ENCODE measurements at regions of chr2 and their contacts with region 1.

Region 1: DNA sequence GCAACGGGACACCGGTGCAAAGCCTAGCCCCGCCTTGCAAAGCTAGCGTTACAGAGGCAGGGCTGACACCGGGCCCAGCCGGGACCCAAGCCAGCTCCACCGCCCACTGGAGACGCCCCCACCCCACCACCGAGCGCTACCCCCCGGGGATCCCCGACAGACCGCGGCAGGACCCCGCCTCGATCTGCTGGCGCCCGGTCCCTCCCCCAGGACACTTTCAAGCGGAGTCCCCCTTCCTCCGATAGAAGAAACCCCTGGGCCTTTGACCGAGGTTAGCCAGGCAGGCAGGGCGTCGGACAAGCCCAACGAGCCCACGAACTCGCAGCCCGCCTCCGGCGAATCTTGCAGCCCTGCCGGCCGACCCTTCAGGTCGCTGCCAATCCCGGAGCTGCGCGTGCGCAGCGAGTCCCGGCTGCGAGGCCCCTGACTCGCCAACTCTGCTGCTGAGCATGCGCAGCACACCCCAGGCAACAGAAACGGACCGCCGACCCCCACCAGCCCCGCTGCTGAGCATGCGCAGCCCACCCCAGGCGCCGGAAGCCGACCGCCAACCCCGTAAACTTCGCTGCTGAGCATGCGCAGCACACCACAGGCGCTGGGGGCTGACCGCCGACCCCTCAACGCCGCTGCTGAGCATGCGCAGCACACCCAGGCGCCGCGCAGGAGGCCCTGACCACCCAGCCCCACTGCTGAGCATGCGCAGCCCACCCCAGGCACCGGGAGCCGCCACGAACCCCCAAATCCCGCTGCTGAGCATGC is 656 bp downstream of the ADI1 start:
- DNase-seq: peak; percentile 92
- H3K4me3 Mint-ChIP-seq: peak overlapping the region; percentile 78
- H3K27ac Mint-ChIP-seq: peak overlapping the region; percentile 65
- H3K4me1 Mint-ChIP-seq: peaks cover 26% of the 10 kb centered on the region
- H3K27me3 Mint-ChIP-seq: no peaks in the 10 kb centered on the region
- CTCF ChIP-seq: no peak

Region 2: GRCh38 chr2:3470166-3470651 is 48.5 kb before region 1 on chr2:
- CTCF ChIA-PET with region 1: interaction called, 3 read pairs
- POLR2A ChIA-PET with region 1: interaction called, 23 read pairs
- intact Hi-C with region 1: no loop called
- DNase-seq: peak; percentile 82
- H3K4me3 Mint-ChIP-seq: peak overlapping the region; percentile 66
- H3K27ac Mint-ChIP-seq: peak overlapping the region; percentile 95
- H3K4me1 Mint-ChIP-seq: peaks cover 51% of the 10 kb centered on the region
- H3K27me3 Mint-ChIP-seq: no peaks in the 10 kb centered on the region
- CTCF ChIP-seq: no peak

Region 3: DNA sequence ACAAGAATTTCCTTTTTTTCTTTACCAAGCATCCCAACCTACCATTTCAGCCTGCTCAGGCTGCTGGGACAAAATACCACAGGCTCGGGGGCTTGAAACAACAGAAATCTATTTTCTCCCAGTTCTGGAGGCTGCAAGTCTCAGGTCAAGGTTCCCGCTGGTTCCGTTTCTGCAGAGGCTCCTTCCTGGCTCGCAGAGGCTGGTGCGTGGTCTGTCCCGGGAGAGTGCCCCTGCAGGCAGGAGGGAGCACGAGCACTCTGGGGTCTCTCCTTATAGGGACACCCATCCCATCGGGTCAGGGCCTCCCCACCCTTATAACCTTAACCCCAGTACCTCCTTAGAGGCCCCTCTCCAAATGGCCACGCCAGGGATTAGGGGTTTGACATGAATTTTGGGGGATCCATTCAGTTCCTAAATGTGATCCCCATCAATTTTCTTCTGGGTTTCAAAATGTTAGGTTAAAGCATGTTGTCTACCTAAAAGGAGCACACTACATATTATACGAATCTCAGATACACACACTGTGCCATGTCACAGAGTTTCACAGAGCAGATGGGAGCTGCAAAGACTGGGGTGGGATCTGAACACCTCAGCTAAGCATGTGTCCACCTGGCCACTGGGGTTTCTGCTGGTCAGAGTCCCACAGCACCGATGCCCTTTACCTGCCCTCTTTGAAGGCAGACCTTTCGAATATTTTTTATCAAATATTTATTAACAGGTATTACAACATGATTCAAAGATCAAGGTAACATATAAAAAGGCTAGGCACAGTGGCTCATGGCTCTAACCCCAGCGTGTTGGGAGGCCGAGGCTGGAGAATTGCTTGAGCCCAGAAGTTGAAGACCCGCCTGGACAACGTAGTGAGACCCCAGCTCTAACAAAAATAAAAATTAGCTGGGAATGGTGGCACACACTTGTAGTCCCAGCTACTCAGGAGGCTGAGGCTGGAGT is 18.3 kb after region 1 on chr2:
- CTCF ChIA-PET with region 1: interaction called, 6 read pairs
- POLR2A ChIA-PET with region 1: interaction called, 18 read pairs
- intact Hi-C with region 1: no loop called
- DNase-seq: peak; percentile 15
- H3K4me3 Mint-ChIP-seq: peak overlapping the region; percentile 66
- H3K27ac Mint-ChIP-seq: peak overlapping the region; percentile 95
- H3K4me1 Mint-ChIP-seq: peaks cover 15% of the 10 kb centered on the region
- H3K27me3 Mint-ChIP-seq: no peaks in the 10 kb centered on the region
- CTCF ChIP-seq: no peak

Region 4: DNA sequence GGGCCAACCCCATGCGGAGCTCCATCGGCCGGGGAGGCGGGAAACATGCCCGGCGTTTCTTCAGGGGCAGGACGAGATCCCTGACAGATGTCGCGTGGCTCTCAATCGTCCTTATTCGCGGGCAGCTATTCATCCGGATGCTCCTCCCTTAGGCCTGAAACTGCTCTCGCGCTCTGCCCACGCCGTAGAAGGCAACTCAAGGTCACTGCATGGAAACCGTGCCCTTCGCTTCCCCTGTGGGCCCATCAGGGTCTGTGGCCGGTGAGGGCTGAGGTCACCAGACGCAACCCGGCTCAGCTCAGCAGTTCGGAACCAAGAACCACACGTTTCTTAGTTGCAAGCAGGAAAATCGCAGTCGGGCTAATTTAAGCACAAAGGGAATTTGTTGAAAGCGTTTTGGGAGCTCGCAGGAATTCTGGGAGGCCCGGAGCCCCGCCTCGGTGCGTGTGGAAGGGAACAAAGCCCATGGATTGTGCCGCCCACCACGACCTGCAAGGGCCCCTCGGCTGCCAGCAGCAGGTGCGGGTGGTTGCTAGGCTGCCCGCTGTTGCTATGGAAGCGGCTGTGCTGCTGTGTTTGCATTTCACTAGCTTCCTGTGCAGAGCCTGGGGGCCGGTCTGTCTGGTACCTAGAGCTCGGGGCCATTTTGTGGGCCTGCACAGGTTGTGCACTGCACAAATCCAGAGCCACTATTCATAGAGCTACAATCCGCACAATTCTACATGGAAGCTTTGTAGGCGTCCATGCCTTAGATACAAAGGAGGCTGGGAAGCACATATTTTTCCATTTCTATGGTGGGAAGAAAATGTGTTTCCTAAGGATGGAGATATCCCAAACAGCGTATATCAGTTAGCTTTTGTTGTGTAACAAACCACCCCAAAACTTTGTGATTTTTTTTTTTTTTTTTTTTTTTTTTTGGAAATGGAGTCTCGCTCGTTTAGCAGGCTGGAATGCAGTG is 133.3 kb after region 1 on chr2:
- CTCF ChIA-PET with region 1: interaction called, 4 read pairs
- POLR2A ChIA-PET with region 1: no interaction called
- intact Hi-C with region 1: loop called (anchors 1 kb)
- DNase-seq: no peak
- H3K4me3 Mint-ChIP-seq: no peak overlapping the region
- H3K27ac Mint-ChIP-seq: no peak overlapping the region
- H3K4me1 Mint-ChIP-seq: peaks cover 7% of the 10 kb centered on the region
- H3K27me3 Mint-ChIP-seq: no peaks in the 10 kb centered on the region
- CTCF ChIP-seq: no peak